CD4-positive, alpha-beta memory T cell (primary cell): ENCODE measurements at regions of chr15 and their contacts with region 1.

Region 1: GRCh38 chr15:31391687-31392671 is 65.3 kb downstream of the KLF13 start:
- DNase-seq: peak; percentile 78 to 87 (median 79)
- H3K4me3 ChIP-seq: peak overlapping the region; percentile 65 to 77
- H3K4me3 Mint-ChIP-seq: peak overlapping the region; percentile 87 to 96 (median 92)
- H3K27ac ChIP-seq: peak overlapping the region; percentile 57
- H3K27ac Mint-ChIP-seq: peak overlapping the region; percentile 81 to 98 (median 93)
- H3K4me1 ChIP-seq: peaks cover 28% of the 10 kb centered on the region
- H3K4me1 Mint-ChIP-seq: peaks cover 28 to 60% (median 39%) of the 10 kb centered on the region in 4 donors
- H3K27me3 ChIP-seq: no peaks in the 10 kb centered on the region
- H3K27me3 Mint-ChIP-seq: no peaks in the 10 kb centered on the region

Region 2: DNA sequence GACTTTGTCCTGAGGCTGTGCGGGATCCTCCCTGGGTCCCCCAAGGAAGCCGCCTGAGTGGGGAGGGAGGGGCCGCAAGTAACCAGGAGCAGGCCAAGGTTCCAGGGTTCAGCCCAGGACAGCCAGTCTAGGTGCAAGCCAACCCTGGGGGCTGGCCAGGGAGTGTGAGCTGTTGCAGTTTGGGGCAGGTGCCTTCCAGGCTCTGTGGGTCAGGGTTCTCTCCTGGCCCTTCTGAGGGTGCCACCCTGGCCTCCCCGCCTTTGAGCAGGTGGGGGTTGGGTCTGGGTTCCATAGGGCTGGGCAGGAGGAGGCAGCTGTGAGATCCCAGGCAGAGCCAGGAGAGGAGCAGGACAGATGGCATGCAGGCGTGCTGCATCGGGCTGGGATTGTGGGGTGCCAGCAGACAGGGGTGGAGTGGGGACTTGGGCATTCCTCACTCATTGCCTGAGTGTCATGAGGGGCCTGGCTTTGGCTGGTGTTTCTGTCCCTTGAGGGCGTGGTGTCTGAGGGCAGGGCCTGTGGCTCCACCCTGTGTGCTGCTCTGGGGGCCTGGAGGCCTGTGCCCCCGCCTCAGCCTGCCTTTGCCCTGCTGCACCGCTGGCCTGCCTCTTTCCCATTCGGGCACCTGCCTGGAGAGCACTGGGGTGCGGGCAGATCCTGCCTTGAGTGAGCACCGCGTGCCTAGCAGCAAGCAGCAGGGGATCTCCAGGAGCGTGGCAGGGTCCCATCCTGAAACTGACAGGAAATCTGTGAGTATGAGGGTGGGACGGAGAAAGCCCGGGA is 47.0 kb before region 1 on chr15:
- CTCF ChIA-PET with region 1: interaction called, 5 read pairs
- POLR2A ChIA-PET with region 1: interaction called, 16 read pairs
- intact Hi-C with region 1: loop called (anchors 5 kb)
- DNase-seq: peak in 1 of 5 donors; percentile 47
- H3K4me3 ChIP-seq: peak overlapping the region; percentile 54 to 60
- H3K4me3 Mint-ChIP-seq: peak overlapping the region; percentile 83 to 95 (median 90)
- H3K27ac ChIP-seq: peak overlapping the region; percentile 74
- H3K27ac Mint-ChIP-seq: peak overlapping the region; percentile 84 to 99 (median 98)
- H3K4me1 ChIP-seq: peaks cover 100% of the 10 kb centered on the region
- H3K4me1 Mint-ChIP-seq: peaks cover 70 to 100% (median 91%) of the 10 kb centered on the region in 4 donors
- H3K27me3 ChIP-seq: no peaks in the 10 kb centered on the region
- H3K27me3 Mint-ChIP-seq: no peaks in the 10 kb centered on the region

Region 3: GRCh38 chr15:31352911-31353811 is 38.8 kb before region 1 on chr15:
- CTCF ChIA-PET with region 1: interaction called, 3 read pairs
- POLR2A ChIA-PET with region 1: interaction called, 66 read pairs
- intact Hi-C with region 1: loop called (anchors 5 kb)
- DNase-seq: peak in 4 of 5 donors; percentile 42 to 72 (median 52)
- H3K4me3 ChIP-seq: peak overlapping the region; percentile 15 to 31
- H3K4me3 Mint-ChIP-seq: peak overlapping the region; percentile 76 to 92 (median 85)
- H3K27ac ChIP-seq: peak overlapping the region; percentile 74
- H3K27ac Mint-ChIP-seq: peak overlapping the region; percentile 91 to 99 (median 95)
- H3K4me1 ChIP-seq: peaks cover 100% of the 10 kb centered on the region
- H3K4me1 Mint-ChIP-seq: peaks cover 71 to 100% (median 91%) of the 10 kb centered on the region in 4 donors
- H3K27me3 ChIP-seq: no peaks in the 10 kb centered on the region
- H3K27me3 Mint-ChIP-seq: no peaks in the 10 kb centered on the region

Region 4: GRCh38 chr15:31405200-31405920 is 13.4 kb after region 1 on chr15:
- CTCF ChIA-PET with region 1: interaction called, 4 read pairs
- POLR2A ChIA-PET with region 1: interaction called, 17 read pairs
- intact Hi-C with region 1: no loop called
- DNase-seq: no peak
- H3K4me3 ChIP-seq: no peak overlapping the region
- H3K4me3 Mint-ChIP-seq: peak overlapping the region in 4 of 8 donors; percentile 37 to 55 (median 51)
- H3K27ac ChIP-seq: no peak overlapping the region
- H3K27ac Mint-ChIP-seq: peak overlapping the region in 6 of 7 donors; percentile 1 to 84 (median 48)
- H3K4me1 ChIP-seq: peaks cover 5% of the 10 kb centered on the region
- H3K4me1 Mint-ChIP-seq: peaks cover 10 to 17% (median 13%) of the 10 kb centered on the region in 4 donors
- H3K27me3 ChIP-seq: no peaks in the 10 kb centered on the region
- H3K27me3 Mint-ChIP-seq: peaks cover 0 to 7% of the 10 kb centered on the region in 2 donors

Region 5: GRCh38 chr15:32020156-32020555 is 628.2 kb after region 1 on chr15:
- CTCF ChIA-PET with region 1: no interaction called
- POLR2A ChIA-PET with region 1: no interaction called
- intact Hi-C with region 1: no loop called
- DNase-seq: no peak
- H3K4me3 ChIP-seq: no peak overlapping the region
- H3K4me3 Mint-ChIP-seq: no peak overlapping the region
- H3K27ac ChIP-seq: no peak overlapping the region
- H3K27ac Mint-ChIP-seq: no peak overlapping the region
- H3K4me1 ChIP-seq: no peaks in the 10 kb centered on the region
- H3K4me1 Mint-ChIP-seq: no peaks in the 10 kb centered on the region
- H3K27me3 ChIP-seq: no peaks in the 10 kb centered on the region
- H3K27me3 Mint-ChIP-seq: peaks cover 21 to 22% of the 10 kb centered on the region in 2 donors